ENCODE measurements at regions of chr5 and their contacts with region 1.

Region 1: GRCh38 chr5:50711273-50711672 is 44.8 kb downstream of the PARP8 start:
- DNase-seq: peak; percentile 65
- H3K4me3 Mint-ChIP-seq: peak overlapping the region; percentile 74
- H3K27ac Mint-ChIP-seq: peak overlapping the region; percentile 91
- H3K4me1 Mint-ChIP-seq: peaks cover 50% of the 10 kb centered on the region
- H3K27me3 Mint-ChIP-seq: no peaks in the 10 kb centered on the region

Region 2: DNA sequence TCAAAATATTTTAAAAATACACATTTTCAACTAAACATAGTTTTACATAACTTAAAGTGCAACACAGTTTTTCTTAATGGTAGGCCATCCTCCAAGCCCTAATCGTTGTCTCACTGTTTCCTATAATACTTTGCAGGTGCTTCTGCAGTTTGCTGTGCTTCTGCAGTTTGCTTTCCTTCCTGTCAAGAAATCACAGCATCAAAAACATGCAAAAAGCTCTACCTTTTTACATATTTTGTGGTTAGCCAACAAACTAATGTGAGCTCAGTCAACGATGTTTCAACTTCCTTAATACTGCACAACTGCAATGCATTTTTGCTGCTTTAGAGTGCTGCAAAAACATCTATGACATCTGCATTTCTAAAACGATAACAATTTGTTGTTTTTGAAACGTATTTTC is 295.4 kb before region 1 on chr5:
- intact Hi-C with region 1: no loop called
- DNase-seq: no peak
- H3K4me3 Mint-ChIP-seq: no peak overlapping the region
- H3K27ac Mint-ChIP-seq: no peak overlapping the region
- H3K4me1 Mint-ChIP-seq: peaks cover 40% of the 10 kb centered on the region
- H3K27me3 Mint-ChIP-seq: no peaks in the 10 kb centered on the region

Region 3: DNA sequence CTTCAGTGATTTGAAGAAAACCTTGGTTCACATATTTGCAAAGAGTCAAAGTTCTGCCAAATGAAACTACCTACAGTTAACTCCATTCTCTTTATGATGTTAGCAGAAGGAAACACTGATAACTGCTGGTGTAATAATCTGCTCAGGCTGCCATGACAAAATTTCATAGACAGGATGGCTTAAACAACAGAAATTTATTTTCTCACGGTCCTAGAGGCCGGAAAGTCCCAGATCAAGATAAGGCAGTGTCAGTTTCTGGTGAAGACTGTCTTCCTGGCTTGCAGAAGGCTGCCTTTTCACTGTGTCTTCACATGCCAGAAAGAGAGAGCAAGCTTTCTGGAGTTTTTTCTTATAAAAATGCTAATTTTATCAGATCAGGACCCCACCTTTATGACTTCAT is 147.2 kb before region 1 on chr5:
- intact Hi-C with region 1: loop called (anchors 2 kb)
- DNase-seq: peak; percentile 38
- H3K4me3 Mint-ChIP-seq: peak overlapping the region; percentile 45
- H3K27ac Mint-ChIP-seq: peak overlapping the region; percentile 46
- H3K4me1 Mint-ChIP-seq: peaks cover 36% of the 10 kb centered on the region
- H3K27me3 Mint-ChIP-seq: no peaks in the 10 kb centered on the region

Region 4: DNA sequence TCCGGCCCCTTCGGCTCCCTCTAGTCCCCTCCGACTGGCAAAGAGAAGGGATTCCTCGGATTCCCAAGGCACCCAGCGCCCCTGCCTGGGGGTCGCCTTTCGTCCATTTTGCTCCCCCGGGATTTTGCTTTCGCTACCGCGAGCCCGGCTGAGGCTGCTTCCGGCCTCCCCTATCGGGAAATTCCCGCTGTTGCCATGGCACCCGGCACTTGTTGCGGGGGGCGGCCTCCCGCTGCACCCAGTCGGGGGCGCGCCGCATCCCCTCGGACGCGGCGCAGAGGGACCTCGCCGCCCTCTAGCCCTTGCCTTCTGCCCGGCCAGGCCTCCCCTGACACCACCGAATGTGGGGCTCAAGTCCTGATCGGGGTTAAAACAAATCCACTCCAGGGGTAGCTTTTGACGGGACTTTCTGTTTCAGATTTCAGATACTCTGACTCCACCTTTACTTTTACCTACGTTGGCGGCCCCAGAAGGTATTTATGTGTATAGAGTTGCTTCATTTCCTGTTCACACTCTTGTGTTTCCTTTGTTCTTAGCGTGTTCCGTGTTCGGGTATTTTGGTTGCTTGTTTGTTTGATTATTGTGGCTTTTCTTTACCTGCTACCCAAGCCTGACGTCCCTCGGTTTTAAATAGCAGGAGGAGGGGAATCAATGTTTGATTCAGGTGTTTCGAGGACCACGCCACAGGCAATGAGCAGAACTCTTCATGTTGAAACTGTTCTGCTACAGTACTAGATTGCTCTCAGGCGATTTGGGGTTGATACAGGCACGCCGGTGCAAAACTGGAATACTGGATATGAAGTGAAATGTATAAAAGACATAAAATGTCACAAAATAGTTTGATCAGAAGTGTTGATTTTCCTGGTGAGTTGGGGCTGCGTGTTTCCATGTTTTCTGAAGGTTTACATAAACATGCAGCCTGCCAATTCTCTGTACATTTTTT is 43.3 kb before region 1 on chr5:
- intact Hi-C with region 1: loop called (anchors 1 kb)
- DNase-seq: peak; percentile 74
- H3K4me3 Mint-ChIP-seq: peak overlapping the region; percentile 98
- H3K27ac Mint-ChIP-seq: peak overlapping the region; percentile 100
- H3K4me1 Mint-ChIP-seq: peaks cover 47% of the 10 kb centered on the region
- H3K27me3 Mint-ChIP-seq: no peaks in the 10 kb centered on the region

Region 5: DNA sequence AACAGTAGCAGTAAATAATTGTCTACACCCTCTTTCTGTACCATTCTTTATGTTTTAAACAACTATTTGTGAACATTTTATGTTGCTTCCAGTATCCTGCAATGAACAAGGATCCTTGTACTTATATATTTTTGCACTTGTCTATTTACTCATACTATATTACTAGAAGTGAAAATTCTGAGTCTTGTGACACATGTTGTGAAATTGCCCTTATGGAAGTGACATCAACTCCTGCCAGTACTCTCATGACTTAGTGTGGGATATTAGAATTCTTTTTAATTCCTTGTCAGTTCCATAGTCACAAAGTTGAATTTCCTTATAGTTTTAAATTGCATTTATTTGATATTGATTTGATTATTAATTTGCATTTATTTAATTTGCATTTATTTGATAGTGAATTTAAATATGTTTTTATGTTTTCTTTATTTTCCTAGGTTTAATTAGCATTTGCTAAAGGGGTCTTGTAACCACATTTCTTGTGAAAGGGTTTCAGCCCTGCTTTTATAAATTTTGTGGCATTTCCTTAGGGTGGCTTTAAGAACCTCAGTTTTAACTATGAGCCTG is 17.2 kb before region 1 on chr5:
- intact Hi-C with region 1: loop called (anchors 2 kb)
- DNase-seq: no peak
- H3K4me3 Mint-ChIP-seq: no peak overlapping the region
- H3K27ac Mint-ChIP-seq: no peak overlapping the region
- H3K4me1 Mint-ChIP-seq: peaks cover 22% of the 10 kb centered on the region
- H3K27me3 Mint-ChIP-seq: no peaks in the 10 kb centered on the region

Region 6: DNA sequence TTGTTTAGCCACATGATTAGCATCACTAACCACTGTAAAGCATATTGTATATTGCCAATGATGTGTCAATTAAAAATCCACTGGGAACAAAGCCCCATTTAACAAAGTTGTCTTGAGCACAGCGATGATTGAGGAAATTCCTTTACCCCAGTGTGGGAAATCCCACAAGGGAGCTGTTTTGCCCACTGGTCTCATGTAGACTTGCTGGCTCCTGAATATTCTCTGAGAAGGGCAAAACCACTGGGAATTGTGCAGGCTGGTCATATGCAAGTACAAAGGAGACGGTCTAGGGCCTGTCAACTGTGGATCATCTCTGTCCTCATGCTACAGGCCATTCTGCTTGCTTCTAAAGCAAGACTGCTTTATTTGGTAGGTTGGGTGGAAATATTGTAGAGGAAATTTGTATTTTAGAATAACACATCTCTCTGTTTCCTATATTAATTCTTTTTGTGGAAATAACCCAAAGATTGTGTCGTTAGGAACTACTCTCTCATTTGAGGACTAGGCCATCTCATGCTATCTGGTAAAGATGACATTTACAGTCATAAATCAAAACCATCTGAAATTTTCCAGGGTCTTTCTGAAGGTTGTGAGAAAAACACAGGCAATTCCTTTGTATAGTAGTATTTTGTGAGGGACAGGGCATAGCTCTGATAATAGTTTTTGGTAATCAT is 15.3 kb after region 1 on chr5:
- intact Hi-C with region 1: loop called (anchors 1 kb)
- DNase-seq: no peak
- H3K4me3 Mint-ChIP-seq: no peak overlapping the region
- H3K27ac Mint-ChIP-seq: peak overlapping the region; percentile 82
- H3K4me1 Mint-ChIP-seq: peaks cover 25% of the 10 kb centered on the region
- H3K27me3 Mint-ChIP-seq: no peaks in the 10 kb centered on the region

Region 7: GRCh38 chr5:50744776-50745175 is 33.5 kb after region 1 on chr5:
- intact Hi-C with region 1: loop called (anchors 2 kb)
- DNase-seq: no peak
- H3K4me3 Mint-ChIP-seq: peak overlapping the region; percentile 79
- H3K27ac Mint-ChIP-seq: peak overlapping the region; percentile 83
- H3K4me1 Mint-ChIP-seq: peaks cover 56% of the 10 kb centered on the region
- H3K27me3 Mint-ChIP-seq: no peaks in the 10 kb centered on the region

Region 8: DNA sequence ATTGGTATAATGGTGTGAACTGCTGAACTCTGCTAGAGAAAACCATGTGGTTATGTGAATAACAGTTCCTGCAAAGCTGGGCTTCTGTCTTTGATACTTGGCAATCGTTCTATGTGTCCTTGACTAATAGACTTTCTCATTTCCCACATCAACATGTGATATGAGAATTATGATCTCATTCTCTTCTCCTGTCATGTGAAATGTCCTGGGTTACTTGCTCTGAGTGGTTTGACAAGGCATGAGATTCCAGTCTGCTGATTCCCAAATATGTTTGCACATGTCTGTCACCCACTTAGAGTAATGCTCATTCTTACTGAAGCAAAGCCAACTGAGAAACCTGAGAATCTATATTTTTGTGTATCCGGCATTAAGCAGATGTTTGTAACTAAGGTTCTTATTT is 96.4 kb after region 1 on chr5:
- intact Hi-C with region 1: no loop called
- DNase-seq: no peak
- H3K4me3 Mint-ChIP-seq: no peak overlapping the region
- H3K27ac Mint-ChIP-seq: no peak overlapping the region
- H3K4me1 Mint-ChIP-seq: no peaks in the 10 kb centered on the region
- H3K27me3 Mint-ChIP-seq: no peaks in the 10 kb centered on the region